Dendritic cell treated with granulocyte-macrophage colony-stimulating factor and Interleukin-4, amounts not matched to agents 40 ng/mL and 50 ng/mL, for 4 days (primary cell): ENCODE measurements at regions of chr13 and their contacts with region 1.

Region 1: GRCh38 chr13:97030705-97031452 is 36.6 kb upstream of the OXGR1 start:
- H3K4me3 Mint-ChIP-seq: no peak overlapping the region
- H3K27ac Mint-ChIP-seq: no peak overlapping the region
- H3K4me1 Mint-ChIP-seq: peaks cover 9% of the 10 kb centered on the region
- H3K27me3 Mint-ChIP-seq: peaks cover 11% of the 10 kb centered on the region

Region 2: GRCh38 chr13:96822895-96823294 is 208.0 kb before region 1 on chr13:
- intact Hi-C with region 1: loop called (anchors 10 kb)
- H3K4me3 Mint-ChIP-seq: no peak overlapping the region
- H3K27ac Mint-ChIP-seq: no peak overlapping the region
- H3K4me1 Mint-ChIP-seq: no peaks in the 10 kb centered on the region
- H3K27me3 Mint-ChIP-seq: no peaks in the 10 kb centered on the region

Region 3: DNA sequence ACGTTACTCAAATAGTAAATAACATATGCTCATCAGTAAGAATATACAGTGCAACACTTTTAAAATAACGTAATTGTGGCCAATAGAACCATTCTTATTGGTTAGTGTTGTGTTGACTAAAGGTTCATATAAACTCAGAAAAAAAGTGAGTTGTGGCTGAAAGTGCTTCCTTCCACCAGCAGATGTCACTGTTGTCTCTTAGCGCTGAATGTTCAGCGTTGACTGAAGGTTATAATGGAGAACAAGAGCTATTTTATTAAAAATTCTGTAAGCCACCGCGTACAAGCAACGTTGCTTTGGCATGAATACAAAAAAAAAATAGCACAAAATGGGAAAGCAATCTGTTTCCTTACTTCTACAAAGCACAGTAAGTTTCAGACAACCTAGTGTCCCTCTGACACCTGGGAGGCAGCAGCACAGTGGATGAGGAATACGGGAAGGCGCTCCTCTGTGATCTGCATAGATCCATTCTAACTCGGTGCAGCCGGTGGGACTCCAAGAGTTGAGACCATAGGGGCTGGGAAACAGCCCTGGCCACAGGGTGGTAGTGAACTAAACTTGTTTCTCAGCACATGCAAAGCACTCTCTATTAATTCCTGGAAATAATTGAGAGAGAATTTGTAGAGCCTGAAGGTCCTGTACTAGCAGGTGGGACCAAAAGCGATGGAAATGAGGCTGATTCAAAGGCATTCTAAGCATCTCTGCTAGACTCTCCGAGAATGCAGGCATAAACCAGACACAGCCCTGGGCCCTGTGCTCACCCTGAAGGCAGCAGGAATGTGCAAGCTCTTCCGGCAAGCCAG is 12.6 kb before region 1 on chr13:
- intact Hi-C with region 1: loop called (anchors 1 kb)
- H3K4me3 Mint-ChIP-seq: no peak overlapping the region
- H3K27ac Mint-ChIP-seq: no peak overlapping the region
- H3K4me1 Mint-ChIP-seq: peaks cover 6% of the 10 kb centered on the region
- H3K27me3 Mint-ChIP-seq: peaks cover 54% of the 10 kb centered on the region